IMR-90 (cell line): ENCODE measurements at regions of chr6 and their contacts with region 1.

Region 1: DNA sequence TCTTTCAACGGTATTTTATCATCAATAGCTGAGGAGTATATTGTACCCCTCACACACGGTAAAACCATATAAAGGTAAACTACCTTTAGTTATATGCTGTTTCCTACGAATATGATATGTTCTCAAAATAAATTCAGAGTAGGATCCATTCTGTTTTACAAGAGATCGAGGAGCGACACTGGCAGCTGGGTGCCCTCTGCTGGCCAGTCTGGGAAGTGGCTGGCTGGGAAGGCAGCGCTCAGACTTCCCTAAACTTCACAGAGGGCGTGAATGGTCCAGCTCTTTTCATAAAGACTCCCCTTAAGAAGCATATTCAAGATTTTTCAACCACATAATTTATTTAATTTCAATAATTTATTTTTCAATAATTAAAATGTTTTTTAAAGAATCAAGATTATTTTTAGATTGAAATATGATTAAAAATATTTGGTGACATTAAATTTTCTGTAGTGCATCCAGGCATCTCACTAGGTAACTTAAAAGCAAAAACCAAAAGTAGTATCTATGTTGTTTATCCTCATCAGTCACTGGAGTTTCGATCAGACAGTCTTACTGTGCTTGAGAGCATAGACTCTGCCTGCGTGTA is 187.5 kb upstream of the PDE10A start:
- DNase-seq: peak; percentile 57
- ATAC-seq: peak; percentile 88
- H3K4me3 ChIP-seq: no peak overlapping the region
- H3K27ac ChIP-seq: no peak overlapping the region
- H3K4me1 ChIP-seq: peaks cover 4% of the 10 kb centered on the region
- H3K27me3 ChIP-seq: no peaks in the 10 kb centered on the region
- CTCF ChIP-seq: peak; percentile 95
- POLR2A ChIP-seq: no peak
- RAD21 ChIP-seq: peak; percentile 93

Region 2: DNA sequence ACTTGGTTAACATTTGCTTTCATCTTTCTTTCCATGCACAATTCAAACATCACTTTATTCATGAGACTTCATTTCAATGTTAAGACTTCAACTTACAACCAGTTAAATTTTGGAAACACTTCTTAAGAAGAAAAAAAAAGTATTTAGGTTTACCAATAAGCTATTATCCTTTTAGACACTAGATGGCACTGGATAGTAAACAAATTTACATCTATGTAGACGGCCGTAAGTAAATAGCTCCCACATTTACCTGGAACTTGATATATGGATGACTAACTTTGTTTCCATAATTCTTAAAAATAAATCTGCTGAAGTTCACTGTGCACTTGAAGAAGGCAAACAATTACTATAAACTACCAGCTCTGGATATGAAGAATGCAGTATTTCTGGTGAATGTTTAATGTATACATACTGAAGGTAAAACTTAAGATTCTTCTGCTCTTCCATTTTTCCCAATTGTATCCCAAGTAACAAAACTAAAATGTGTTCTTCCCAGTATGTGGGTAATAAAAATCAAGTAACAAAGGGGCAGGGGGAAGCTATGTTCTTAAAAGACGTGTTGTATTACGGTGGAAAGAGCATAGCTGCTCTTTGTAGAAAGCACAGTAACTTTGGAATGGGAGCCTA is 410.5 kb before region 1 on chr6:
- CTCF ChIA-PET with region 1: interaction called, 12 read pairs
- POLR2A ChIA-PET with region 1: no interaction called
- dilution Hi-C with region 1: no loop called
- in situ Hi-C with region 1: loop called (anchors 5 kb)
- intact Hi-C with region 1: loop called (anchors 1 kb)
- DNase-seq: peak; percentile 73
- ATAC-seq: peak; percentile 65
- H3K4me3 ChIP-seq: no peak overlapping the region
- H3K27ac ChIP-seq: no peak overlapping the region
- H3K4me1 ChIP-seq: no peaks in the 10 kb centered on the region
- H3K27me3 ChIP-seq: no peaks in the 10 kb centered on the region
- CTCF ChIP-seq: peak; percentile 65
- POLR2A ChIP-seq: no peak
- RAD21 ChIP-seq: peak; percentile 68

Region 3: DNA sequence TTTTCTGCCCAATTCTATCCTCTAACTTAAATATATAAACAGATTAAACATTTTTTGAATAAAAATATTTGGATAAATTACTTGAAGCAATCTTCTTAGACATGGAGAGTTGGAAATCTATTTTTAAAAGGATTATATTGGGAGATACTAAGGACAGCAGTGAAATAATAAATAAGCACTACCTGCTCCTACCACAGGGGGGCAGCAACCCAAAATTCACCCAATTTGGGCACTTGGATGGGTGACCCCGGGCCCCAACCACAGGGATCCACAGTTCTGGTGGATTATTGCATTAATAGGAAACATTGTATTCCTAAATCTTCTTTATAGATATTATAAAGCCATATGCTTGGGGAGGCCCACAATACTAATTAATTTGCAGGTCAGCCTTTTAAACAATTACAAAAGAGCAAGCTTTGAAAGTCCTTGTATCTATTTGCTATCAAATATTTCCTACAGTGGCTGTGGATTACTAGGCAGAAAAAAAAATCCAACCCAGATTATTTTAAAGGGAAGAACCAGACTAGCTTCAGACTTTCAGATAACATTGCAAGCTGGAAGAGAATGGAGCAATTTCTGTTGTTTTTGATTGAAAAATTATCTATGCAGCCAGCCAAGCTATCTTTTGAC is 121.1 kb before region 1 on chr6:
- CTCF ChIA-PET with region 1: interaction called, 4 read pairs
- POLR2A ChIA-PET with region 1: no interaction called
- dilution Hi-C with region 1: no loop called
- in situ Hi-C with region 1: loop called (anchors 10 kb)
- intact Hi-C with region 1: loop called (anchors 1 kb)
- DNase-seq: peak; percentile 10
- ATAC-seq: peak; percentile 71
- H3K4me3 ChIP-seq: no peak overlapping the region
- H3K27ac ChIP-seq: no peak overlapping the region
- H3K4me1 ChIP-seq: 0 out of 2 replicates have a peak, but pooled peaks cover 2% of the 10 kb centered on the region
- H3K27me3 ChIP-seq: peaks cover 10% of the 10 kb centered on the region
- CTCF ChIP-seq: peak; percentile 60
- POLR2A ChIP-seq: no peak
- RAD21 ChIP-seq: peak; percentile 38; the same call in 1 of the 2 replicates

Region 4: DNA sequence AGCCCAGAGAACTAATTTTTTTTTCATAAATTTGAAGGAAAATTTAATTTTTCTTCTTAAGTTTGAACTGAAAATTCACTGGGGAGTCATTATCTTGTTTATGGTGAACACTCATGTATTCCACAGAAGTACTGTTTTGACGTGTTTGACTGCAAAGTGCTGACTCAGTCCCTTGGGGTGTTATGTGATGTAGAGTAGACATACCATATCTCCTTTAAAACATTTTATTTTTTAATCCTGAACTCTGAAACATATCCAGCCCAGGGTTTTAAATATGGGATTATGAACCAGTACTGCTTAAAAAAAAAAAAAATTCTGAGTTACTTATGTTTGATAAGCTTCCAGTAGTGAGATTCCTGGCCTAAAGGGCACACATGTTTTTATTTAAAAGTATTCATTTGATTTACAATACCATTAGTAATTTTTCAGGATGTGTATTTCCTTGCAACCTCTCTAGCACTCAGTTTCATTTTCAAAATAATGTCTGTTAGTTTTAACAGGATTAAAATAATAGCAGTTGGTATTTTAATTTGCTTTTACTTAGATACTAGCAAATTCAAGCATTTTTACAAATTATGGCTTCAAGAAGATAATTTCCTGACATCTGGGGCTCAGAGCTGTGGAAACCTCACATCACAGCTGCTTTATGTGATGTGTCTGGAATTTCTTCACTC is 105.8 kb before region 1 on chr6:
- CTCF ChIA-PET with region 1: no interaction called
- POLR2A ChIA-PET with region 1: no interaction called
- dilution Hi-C with region 1: no loop called
- in situ Hi-C with region 1: no loop called
- intact Hi-C with region 1: no loop called
- DNase-seq: peak; percentile 41
- ATAC-seq: peak; percentile 60
- H3K4me3 ChIP-seq: no peak overlapping the region
- H3K27ac ChIP-seq: no peak overlapping the region
- H3K4me1 ChIP-seq: peaks cover 4% of the 10 kb centered on the region; the same call in 1 of the 2 replicates
- H3K27me3 ChIP-seq: peaks cover 7% of the 10 kb centered on the region
- CTCF ChIP-seq: no peak
- POLR2A ChIP-seq: no peak
- RAD21 ChIP-seq: no peak

Region 5: DNA sequence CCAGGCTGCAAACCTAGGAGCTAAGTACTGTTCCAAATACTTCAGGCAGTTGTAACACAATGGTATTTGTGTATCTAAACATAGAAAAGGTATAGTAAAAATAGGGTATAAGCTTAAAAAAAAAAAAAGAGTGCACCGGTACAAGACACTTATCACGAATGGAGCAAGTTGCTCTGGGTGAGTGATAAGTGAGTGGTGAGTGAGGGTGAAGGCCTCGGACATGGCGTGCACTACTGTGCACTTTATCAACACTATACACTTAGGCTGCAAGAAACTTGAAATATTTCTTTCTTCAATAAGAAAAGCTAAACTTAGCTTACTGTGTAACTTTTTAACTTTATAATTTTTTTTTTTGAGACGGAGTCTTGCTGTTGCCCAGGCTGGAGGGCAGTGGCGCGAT is 28.0 kb before region 1 on chr6:
- CTCF ChIA-PET with region 1: interaction called, 11 read pairs
- POLR2A ChIA-PET with region 1: no interaction called
- dilution Hi-C with region 1: no loop called
- in situ Hi-C with region 1: no loop called
- intact Hi-C with region 1: no loop called
- DNase-seq: no peak
- ATAC-seq: no peak
- H3K4me3 ChIP-seq: no peak overlapping the region
- H3K27ac ChIP-seq: no peak overlapping the region
- H3K4me1 ChIP-seq: peaks cover 3% of the 10 kb centered on the region
- H3K27me3 ChIP-seq: peaks cover 4% of the 10 kb centered on the region; the same call in 1 of the 2 replicates
- CTCF ChIP-seq: no peak
- POLR2A ChIP-seq: no peak
- RAD21 ChIP-seq: no peak